ENCODE measurements at regions of chr12 and their contacts with region 1.

Region 1: DNA sequence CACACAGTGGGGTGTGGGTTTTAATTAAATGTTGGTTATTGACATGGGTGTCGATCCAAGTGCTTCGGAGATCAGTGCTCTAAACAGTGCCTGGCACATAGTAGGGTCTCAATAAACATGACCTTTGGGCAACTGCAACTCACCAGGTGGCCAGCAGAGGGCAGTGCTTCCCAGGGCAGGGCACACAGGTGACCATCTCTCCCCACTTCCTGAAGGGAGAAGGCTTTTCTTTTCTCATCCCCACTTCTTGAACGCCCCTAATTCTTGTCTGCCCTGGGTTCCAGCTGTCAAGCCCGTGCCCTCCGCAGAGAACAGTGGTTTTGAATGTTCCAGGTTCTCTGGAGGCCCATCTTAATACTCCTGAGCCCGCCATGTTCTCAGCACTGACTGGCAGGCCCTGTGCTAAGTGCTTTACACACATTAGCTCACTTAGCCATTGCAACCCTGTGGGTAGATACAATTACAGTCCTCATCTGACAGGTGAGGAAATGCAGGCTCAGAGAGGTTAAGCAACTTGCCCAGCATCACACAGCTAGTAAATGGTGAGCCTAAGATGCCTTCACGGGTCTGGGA is 16.3 kb downstream of the RAPGEF3 start:
- DNase-seq: peak; percentile 67
- H3K4me3 ChIP-seq: no peak overlapping the region
- H3K27ac ChIP-seq: no peak overlapping the region
- H3K4me1 ChIP-seq: peaks cover 44% of the 10 kb centered on the region
- CTCF ChIP-seq: peak; percentile 99

Region 2: GRCh38 chr12:47705566-47706425 is 36.5 kb before region 1 on chr12 and contains the start of gene RPAP3:
- CTCF ChIA-PET with region 1: interaction called, 6 read pairs
- POLR2A ChIA-PET with region 1: interaction called, 10 read pairs
- intact Hi-C with region 1: no loop called
- DNase-seq: peak; percentile 97
- H3K4me3 ChIP-seq: peak within 1 kb of the TSS; percentile 86
- H3K27ac ChIP-seq: peak within 1 kb of the TSS; percentile 83
- H3K4me1 ChIP-seq: peaks cover 54% of the 10 kb centered on the region
- CTCF ChIP-seq: peak; percentile 74
- total RNA-seq, gene RPAP3: 21.6 and 25.1 TPM in 2 replicates

Region 3: DNA sequence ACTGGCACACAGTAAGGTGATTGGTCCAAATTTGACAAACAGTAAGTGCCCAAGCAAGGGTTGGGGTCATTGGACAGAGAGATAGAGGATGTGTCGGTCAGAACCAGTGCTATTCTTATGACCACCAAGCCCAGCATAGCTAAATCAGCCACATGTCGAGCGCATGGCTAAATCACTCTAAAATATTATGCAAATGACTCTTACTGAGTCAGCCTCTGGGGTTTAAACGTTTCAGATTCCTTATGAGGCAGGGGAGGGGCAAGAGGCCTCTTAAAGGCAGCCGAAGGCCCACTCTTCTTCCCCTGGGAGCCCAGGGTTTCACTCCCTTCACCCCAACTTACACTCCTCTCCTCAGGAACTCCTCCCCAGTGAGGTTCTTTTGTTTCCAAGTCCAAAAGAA is 16.4 kb before region 1 on chr12:
- CTCF ChIA-PET with region 1: interaction called, 13 read pairs
- POLR2A ChIA-PET with region 1: interaction called, 24 read pairs
- intact Hi-C with region 1: no loop called
- DNase-seq: peak; percentile 27
- H3K4me3 ChIP-seq: no peak overlapping the region
- H3K27ac ChIP-seq: no peak overlapping the region
- H3K4me1 ChIP-seq: peaks cover 19% of the 10 kb centered on the region
- CTCF ChIP-seq: no peak

Region 4: GRCh38 chr12:47767216-47767724 is 24.9 kb after region 1 on chr12:
- CTCF ChIA-PET with region 1: interaction called, 74 read pairs
- POLR2A ChIA-PET with region 1: interaction called, 14 read pairs
- intact Hi-C with region 1: loop called (anchors 1 kb)
- DNase-seq: peak; percentile 78
- H3K4me3 ChIP-seq: no peak overlapping the region
- H3K27ac ChIP-seq: no peak overlapping the region
- H3K4me1 ChIP-seq: peaks cover 19% of the 10 kb centered on the region
- CTCF ChIP-seq: peak; percentile 86

Region 5: GRCh38 chr12:47832263-47832933 is 90.1 kb after region 1 on chr12:
- CTCF ChIA-PET with region 1: interaction called, 47 read pairs
- POLR2A ChIA-PET with region 1: interaction called, 21 read pairs
- intact Hi-C with region 1: no loop called
- DNase-seq: peak; percentile 77
- H3K4me3 ChIP-seq: peak overlapping the region; percentile 54
- H3K27ac ChIP-seq: peak overlapping the region; percentile 93
- H3K4me1 ChIP-seq: peaks cover 94% of the 10 kb centered on the region
- CTCF ChIP-seq: no peak